ENCODE measurements at regions of chr7 and their contacts with region 1.

Region 1: GRCh38 chr7:42924223-42924838 is 7.6 kb downstream of the PSMA2 start:
- DNase-seq: no peak
- H3K4me3 Mint-ChIP-seq: no peak overlapping the region
- H3K27ac Mint-ChIP-seq: no peak overlapping the region
- H3K4me1 Mint-ChIP-seq: peaks cover 76% of the 10 kb centered on the region
- H3K27me3 Mint-ChIP-seq: no peaks in the 10 kb centered on the region

Region 2: GRCh38 chr7:41930538-41931262 is 993.6 kb before region 1 on chr7:
- intact Hi-C with region 1: no loop called
- DNase-seq: no peak
- H3K4me3 Mint-ChIP-seq: no peak overlapping the region
- H3K27ac Mint-ChIP-seq: no peak overlapping the region
- H3K4me1 Mint-ChIP-seq: peaks cover 5% of the 10 kb centered on the region
- H3K27me3 Mint-ChIP-seq: peaks cover 6% of the 10 kb centered on the region

Region 3: GRCh38 chr7:42911454-42912447 is 12.6 kb before region 1 on chr7 and contains the start of gene C7orf25:
- intact Hi-C with region 1: loop called (anchors 1 kb)
- DNase-seq: peak; percentile 93
- H3K4me3 Mint-ChIP-seq: peak within 1 kb of the TSS; percentile 90
- H3K27ac Mint-ChIP-seq: peak within 1 kb of the TSS; percentile 80
- H3K4me1 Mint-ChIP-seq: peaks cover 86% of the 10 kb centered on the region
- H3K27me3 Mint-ChIP-seq: no peaks in the 10 kb centered on the region
- total RNA-seq, gene C7orf25: 5.7 and 6.1 TPM in 2 replicates

Measured in activated T-helper 1 cell treated with anti-CD3 and anti-CD28 coated beads, Interleukin-12 subunit alpha, Interleukin-12 subunit beta, Interleukin-2, Interleukin-4 antibody, amounts not matched to agents 30 ng/mL and 10 ng/mL and 1 ng/mL, durations not matched to agents 14 hours and 24 hours and 36 hours (primary cell).